Heart right ventricle (tissue), 16 donors: ENCODE measurements at regions of chr6 and their contacts with region 1.

Region 1: DNA sequence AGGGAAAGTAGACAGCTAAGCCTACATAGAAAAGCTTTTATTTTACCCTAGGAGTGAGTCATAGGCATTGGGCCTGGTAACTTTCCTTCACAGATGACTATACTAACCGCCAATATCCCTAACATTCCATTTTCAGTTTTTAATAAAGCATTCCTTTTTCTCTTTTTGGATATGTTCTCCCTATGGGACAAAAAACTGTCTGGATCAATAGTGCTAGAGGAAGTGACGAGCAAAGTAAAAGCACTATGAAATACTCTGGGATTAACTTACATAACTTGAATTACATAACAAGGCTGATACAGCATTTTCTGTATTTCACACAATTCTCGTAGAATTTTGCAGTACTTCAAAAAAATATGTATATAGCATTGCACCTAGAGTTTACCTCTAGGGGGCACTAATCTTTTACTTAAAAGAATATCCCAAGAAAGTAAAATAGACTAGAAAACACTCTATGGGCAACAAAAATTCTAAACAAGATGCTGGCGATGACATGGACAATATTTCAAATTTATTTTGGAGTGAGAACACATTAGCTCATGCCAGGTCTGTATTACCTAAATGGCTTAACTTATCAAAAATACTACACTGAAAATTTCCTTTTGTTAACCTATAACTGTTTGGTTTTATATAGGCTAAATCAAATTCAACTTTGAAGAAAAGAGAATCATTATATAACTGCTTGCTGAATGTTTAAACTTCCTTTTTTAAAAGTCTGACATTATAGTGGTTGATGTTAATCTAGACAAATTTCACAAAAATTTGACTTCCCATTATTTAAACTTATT is 66.3 kb upstream of the DST start:
- DNase-seq: no peak
- ATAC-seq: peak in 7 of 8 donors; percentile 17 to 51 (median 31)
- H3K4me3 ChIP-seq: peak overlapping the region in 1 of 10 donors; percentile 9
- H3K27ac ChIP-seq: peak overlapping the region in 7 of 10 donors; percentile 13 to 69 (median 37)
- H3K4me1 ChIP-seq: peaks cover 0 to 48% (median 39%) of the 10 kb centered on the region in 9 donors
- H3K27me3 ChIP-seq: no peaks in the 10 kb centered on the region
- CTCF ChIP-seq: peak; percentile 50 to 79 (median 71)

Region 2: DNA sequence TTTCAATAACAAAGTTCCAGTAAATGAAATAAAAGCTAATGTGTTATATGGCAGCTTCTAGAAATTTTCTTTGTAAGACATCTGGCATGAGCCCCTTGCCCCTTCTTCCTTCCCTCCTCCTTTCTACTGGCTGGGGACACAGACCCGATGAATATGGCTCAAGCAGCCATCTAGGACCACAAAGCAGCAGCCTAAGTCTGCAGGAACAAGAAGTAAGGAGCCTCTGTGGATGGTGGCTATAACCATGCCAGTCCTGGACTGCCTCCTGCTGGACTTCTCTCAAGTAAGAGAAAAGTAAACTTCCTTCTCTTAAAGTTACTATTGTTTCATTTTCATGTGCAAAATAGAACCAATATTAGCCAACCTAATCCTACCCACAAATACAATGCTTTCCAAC is 48.6 kb after region 1 on chr6:
- intact Hi-C with region 1: loop called in 5 of 10 experiments (anchors 2 to 5 kb)
- DNase-seq: no peak
- ATAC-seq: peak in 7 of 8 donors; percentile 22 to 65 (median 58)
- H3K4me3 ChIP-seq: no peak overlapping the region
- H3K27ac ChIP-seq: peak overlapping the region in 1 of 10 donors; percentile 52
- H3K4me1 ChIP-seq: peaks cover 3 to 68% (median 59%) of the 10 kb centered on the region in 9 donors
- H3K27me3 ChIP-seq: no peaks in the 10 kb centered on the region
- CTCF ChIP-seq: peak in 6 of 9 donors; percentile 29 to 55 (median 44)